ENCODE measurements at regions of chr12 and their contacts with region 1.

Region 1: DNA sequence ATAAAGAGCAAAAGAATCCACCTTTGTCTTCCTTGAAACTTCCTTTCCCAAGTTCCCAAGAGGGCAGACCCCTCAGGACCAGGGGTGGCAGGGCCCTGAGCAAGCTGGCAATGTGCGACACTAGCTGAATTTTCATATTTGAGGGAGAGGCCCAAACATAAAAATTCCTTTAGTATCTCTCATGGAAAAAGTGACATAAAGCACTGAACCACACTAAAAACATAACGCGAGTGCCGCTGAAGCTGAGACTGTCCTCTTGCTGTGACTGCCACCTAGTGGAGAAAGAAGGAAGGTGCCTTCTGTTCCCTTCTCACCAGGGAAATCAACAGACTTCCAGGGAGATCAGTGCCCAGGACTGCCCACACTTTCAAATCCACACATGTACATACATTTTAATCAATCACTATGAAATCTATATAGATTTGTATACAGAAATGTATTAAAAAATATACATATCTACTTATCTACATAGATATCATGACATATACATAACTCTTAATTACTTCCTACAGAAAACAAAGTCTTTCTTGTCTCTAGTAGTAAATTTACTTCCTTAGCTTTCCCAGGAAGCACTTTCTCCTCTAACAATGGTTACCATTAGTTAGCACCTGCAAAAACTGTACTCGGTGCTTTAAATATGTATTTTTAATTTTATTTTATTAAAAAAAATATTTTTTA is 53.8 kb downstream of the SSH1 start:
- DNase-seq: peak; percentile 88
- CTCF ChIP-seq: peak; percentile 79

Region 2: GRCh38 chr12:108633534-108634248 is 169.9 kb before region 1 on chr12 and contains the start of gene SELPLG:
- CTCF ChIA-PET with region 1: interaction called, 14 read pairs
- POLR2A ChIA-PET with region 1: no interaction called
- DNase-seq: peak; percentile 87
- CTCF ChIP-seq: peak; percentile 20

Region 3: GRCh38 chr12:108664338-108665258 is 139.0 kb before region 1 on chr12:
- CTCF ChIA-PET with region 1: interaction called, 257 read pairs
- POLR2A ChIA-PET with region 1: no interaction called
- DNase-seq: peak; percentile 74
- CTCF ChIP-seq: peak; percentile 65

Region 4: GRCh38 chr12:108714886-108715285 is 88.7 kb before region 1 on chr12:
- CTCF ChIA-PET with region 1: no interaction called
- POLR2A ChIA-PET with region 1: no interaction called
- DNase-seq: no peak
- CTCF ChIP-seq: no peak

Region 5: DNA sequence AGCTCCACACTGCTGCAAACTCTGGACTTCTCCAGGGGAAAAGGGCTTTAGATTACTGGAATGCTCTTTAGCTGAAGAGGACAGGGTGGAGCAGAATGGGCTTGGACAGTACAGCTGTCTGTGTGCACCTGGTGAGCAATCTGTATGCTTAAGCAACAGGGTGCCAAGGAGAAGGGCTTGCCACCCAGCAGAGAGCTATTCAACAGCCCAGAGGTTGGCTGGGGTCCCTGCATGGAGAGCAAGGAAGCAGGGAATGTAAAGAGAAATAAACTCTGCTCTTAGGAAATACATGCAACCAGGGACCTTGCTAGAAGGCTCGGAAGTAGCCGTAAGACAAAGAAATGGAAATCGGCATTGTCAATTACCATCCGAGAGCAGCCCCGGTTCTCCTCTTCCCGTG is 19.3 kb before region 1 on chr12:
- CTCF ChIA-PET with region 1: interaction called, 41 read pairs
- POLR2A ChIA-PET with region 1: no interaction called
- DNase-seq: no peak
- CTCF ChIP-seq: no peak

Region 6: GRCh38 chr12:108950991-108951739 is 147.6 kb after region 1 on chr12:
- CTCF ChIA-PET with region 1: interaction called, 10 read pairs
- POLR2A ChIA-PET with region 1: no interaction called
- DNase-seq: peak; percentile 62
- CTCF ChIP-seq: peak; percentile 81

Measured in GM10248 (cell line).